ENCODE measurements at regions of chr10 and their contacts with region 1.

Region 1: DNA sequence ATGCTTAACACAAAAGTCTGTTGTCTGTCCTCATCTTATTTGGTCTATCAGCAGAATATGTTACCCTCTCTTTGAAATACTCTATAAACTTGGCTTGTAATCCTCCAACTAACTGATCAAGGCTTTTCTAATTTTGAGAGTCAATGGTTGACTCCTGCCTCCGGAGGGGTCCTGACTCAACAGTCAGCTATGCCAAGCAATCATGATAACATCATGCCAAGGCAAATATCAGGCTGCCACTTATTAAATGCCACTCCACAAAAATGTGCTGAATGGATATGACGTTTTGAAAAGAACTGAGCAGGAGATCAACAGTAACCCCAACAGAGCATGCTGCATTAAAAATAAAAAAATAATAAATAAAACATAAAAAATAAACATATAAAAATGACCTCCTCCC is 116.1 kb downstream of the PARD3 start:
- DNase-seq: peak; percentile 76
- H3K4me3 ChIP-seq: no peak overlapping the region
- H3K27ac ChIP-seq: no peak overlapping the region
- H3K4me1 ChIP-seq: peaks cover 47% of the 10 kb centered on the region
- H3K27me3 ChIP-seq: no peaks in the 10 kb centered on the region
- CTCF ChIP-seq: no peak
- POLR2A ChIP-seq: no peak

Region 2: GRCh38 chr10:34139559-34139958 is 559.4 kb before region 1 on chr10:
- CTCF ChIA-PET with region 1: no interaction called
- POLR2A ChIA-PET with region 1: interaction called, 10 read pairs
- dilution Hi-C with region 1: no loop called
- intact Hi-C with region 1: no loop called
- DNase-seq: no peak
- H3K4me3 ChIP-seq: no peak overlapping the region
- H3K27ac ChIP-seq: no peak overlapping the region
- H3K4me1 ChIP-seq: no peaks in the 10 kb centered on the region
- H3K27me3 ChIP-seq: no peaks in the 10 kb centered on the region
- CTCF ChIP-seq: no peak
- POLR2A ChIP-seq: no peak

Region 3: DNA sequence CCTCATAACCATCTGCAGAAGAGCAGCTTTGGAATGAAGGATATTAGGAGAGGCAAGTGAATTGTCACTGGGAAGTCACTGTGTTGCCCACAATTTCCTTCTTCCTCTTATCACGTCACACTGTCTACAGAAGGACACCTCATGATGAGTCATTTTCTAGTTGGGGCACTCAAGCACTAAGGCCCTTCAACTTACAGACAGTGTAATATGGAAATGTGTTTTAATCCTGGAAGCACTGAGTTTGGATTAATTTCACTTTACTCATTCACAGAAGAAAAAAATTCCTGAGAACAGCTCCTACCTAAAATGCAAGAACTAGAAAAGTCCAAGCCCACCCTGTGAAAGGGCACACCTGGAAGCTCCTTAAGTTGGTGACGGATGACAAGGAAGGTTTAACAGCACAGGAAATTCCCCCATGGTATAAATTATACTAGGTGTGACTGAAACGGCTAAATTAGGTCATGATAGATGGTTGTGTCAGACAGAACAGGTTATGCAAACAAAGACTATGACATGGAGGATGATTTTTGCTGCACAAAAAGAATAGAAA is 59.5 kb after region 1 on chr10:
- CTCF ChIA-PET with region 1: no interaction called
- POLR2A ChIA-PET with region 1: no interaction called
- dilution Hi-C with region 1: no loop called
- intact Hi-C with region 1: no loop called
- DNase-seq: peak; percentile 71
- H3K4me3 ChIP-seq: peak overlapping the region in 1 of 3 experiments; percentile 30
- H3K27ac ChIP-seq: peak overlapping the region; percentile 71
- H3K4me1 ChIP-seq: peaks cover 23% of the 10 kb centered on the region
- H3K27me3 ChIP-seq: no peaks in the 10 kb centered on the region
- CTCF ChIP-seq: no peak
- POLR2A ChIP-seq: no peak